ENCODE measurements at regions of chr10 and their contacts with region 1.

Region 1: DNA sequence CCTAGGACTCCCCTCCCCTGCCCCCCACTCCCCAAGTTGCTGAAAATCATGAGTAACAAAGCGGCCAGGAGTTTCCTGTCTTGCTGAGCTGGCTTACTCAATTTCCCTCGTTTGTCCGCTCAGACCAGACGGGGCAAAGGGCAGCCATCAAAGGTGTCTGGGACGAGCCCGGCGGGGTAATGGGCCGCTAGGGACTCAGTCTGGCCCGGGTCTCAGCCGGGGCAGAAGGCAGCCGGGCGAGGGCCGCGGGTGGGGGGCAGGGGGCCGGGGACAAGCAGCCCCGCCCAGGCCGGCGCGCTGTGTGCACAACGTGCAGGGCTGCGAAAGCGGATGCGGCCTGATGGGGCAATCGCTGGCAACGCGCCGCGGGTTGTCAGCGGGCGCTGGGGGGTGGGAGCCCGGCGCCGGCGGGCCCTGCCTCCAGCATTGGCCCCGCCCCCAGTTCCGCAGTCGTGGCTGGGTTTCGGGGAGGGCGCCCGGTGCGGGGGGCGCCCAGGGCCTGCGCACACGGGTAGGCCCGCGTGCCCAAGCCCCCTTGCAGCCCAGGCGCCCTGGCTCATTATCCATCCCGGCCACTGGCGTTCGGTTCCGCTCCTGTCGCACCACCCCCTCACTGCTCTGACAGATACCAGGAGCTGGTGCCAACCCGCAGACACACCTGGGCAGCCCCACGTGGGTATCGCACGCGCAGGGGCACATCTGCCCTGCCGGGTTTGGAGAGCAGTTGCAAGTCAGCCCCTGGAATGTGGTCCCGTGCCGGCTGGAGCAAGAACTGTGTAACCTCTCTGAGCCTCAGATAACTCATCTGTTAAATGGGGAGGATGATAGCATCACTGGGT is 35.1 kb downstream of the DNAJB12 start:
- DNase-seq: peak in 3 of 4 experiments; percentile 49 to 61 (median 58)
- ATAC-seq: no peak
- H3K4me3 ChIP-seq: no peak overlapping the region
- H3K27ac ChIP-seq: peak overlapping the region; percentile 97
- H3K4me1 ChIP-seq: peaks cover 66 to 69% of the 10 kb centered on the region in 2 experiments
- H3K27me3 ChIP-seq: no peaks in the 10 kb centered on the region
- CTCF ChIP-seq: no peak
- EP300 ChIP-seq: no peak; the same call in 1 of the 2 replicates
- POLR2A ChIP-seq: no peak
- RAD21 ChIP-seq: no peak

Region 2: DNA sequence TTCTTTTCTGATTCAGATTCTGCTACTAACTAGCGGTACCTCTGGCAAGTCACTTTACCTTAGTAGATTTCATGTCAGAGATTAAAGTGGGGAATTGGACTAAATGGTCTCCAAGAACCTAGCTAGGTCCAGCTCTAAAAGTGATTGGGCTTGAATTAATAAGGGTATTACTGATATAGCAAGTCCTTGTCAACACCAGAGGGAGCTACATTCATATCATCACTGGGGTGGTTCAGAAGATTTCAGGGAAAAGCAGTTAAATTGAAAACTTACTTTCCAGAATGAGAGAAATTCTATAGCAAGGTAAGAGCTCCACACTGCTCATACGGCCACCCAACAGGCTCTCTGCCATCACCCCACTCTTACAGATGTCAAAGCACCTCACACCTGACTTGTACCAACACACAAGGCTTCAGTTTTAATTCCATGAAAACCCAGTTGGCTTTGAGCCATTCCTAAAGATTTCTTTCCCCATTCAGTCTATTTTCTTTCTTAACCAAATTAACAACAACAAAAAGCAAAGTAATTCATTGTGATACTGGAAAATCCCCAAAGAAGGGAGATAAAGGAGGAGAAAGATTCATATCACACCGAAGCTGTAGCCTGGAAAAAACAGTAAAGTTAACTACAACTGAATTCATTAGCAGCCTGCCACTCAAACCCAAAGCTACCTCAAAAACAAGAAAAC is 193.3 kb before region 1 on chr10:
- CTCF ChIA-PET with region 1: no interaction called
- POLR2A ChIA-PET with region 1: interaction called, 13 read pairs
- in situ Hi-C with region 1: no loop called
- intact Hi-C with region 1: no loop called
- DNase-seq: peak; percentile 27 to 59 (median 46)
- ATAC-seq: peak; percentile 79
- H3K4me3 ChIP-seq: no peak overlapping the region
- H3K27ac ChIP-seq: no peak overlapping the region
- H3K4me1 ChIP-seq: peaks cover 0 to 5% of the 10 kb centered on the region in 2 experiments; a peak in 1 of 5 replicates
- H3K27me3 ChIP-seq: no peaks in the 10 kb centered on the region
- CTCF ChIP-seq: peak; percentile 47 to 82 (median 58); a peak in 5 of 6 replicates
- EP300 ChIP-seq: no peak
- POLR2A ChIP-seq: no peak
- RAD21 ChIP-seq: peak; percentile 77 to 89

Region 3: GRCh38 chr10:72229261-72230251 is 90.1 kb before region 1 on chr10:
- CTCF ChIA-PET with region 1: no interaction called
- POLR2A ChIA-PET with region 1: interaction called, 10 read pairs
- in situ Hi-C with region 1: no loop called
- intact Hi-C with region 1: no loop called
- DNase-seq: no peak
- ATAC-seq: no peak
- H3K4me3 ChIP-seq: no peak overlapping the region
- H3K27ac ChIP-seq: no peak overlapping the region
- H3K4me1 ChIP-seq: no peaks in the 10 kb centered on the region
- H3K27me3 ChIP-seq: no peaks in the 10 kb centered on the region
- CTCF ChIP-seq: no peak
- EP300 ChIP-seq: no peak
- POLR2A ChIP-seq: no peak
- RAD21 ChIP-seq: no peak

Region 4: GRCh38 chr10:72254813-72255568 is 64.6 kb before region 1 on chr10:
- CTCF ChIA-PET with region 1: no interaction called
- POLR2A ChIA-PET with region 1: interaction called, 16 read pairs
- in situ Hi-C with region 1: no loop called
- intact Hi-C with region 1: no loop called
- DNase-seq: peak; percentile 69 to 82 (median 77)
- ATAC-seq: peak; percentile 92
- H3K4me3 ChIP-seq: peak overlapping the region; percentile 15
- H3K27ac ChIP-seq: peak overlapping the region; percentile 64
- H3K4me1 ChIP-seq: peaks cover 25 to 46% of the 10 kb centered on the region in 2 experiments
- H3K27me3 ChIP-seq: no peaks in the 10 kb centered on the region
- CTCF ChIP-seq: peak in 2 of 3 experiments; percentile 26 to 52; a peak in 3 of 6 replicates
- EP300 ChIP-seq: peak; percentile 48; the same call in 1 of the 2 replicates
- POLR2A ChIP-seq: no peak
- RAD21 ChIP-seq: peak; percentile 48 to 67

Region 5: GRCh38 chr10:72285972-72286521 is 33.6 kb before region 1 on chr10:
- CTCF ChIA-PET with region 1: no interaction called
- POLR2A ChIA-PET with region 1: interaction called, 267 read pairs
- in situ Hi-C with region 1: no loop called
- intact Hi-C with region 1: no loop called
- DNase-seq: peak in 2 of 4 experiments; percentile 6 to 14
- ATAC-seq: no peak; the same call in 1 of the 3 replicates
- H3K4me3 ChIP-seq: no peak overlapping the region
- H3K27ac ChIP-seq: no peak overlapping the region
- H3K4me1 ChIP-seq: peaks cover 12 to 24% of the 10 kb centered on the region in 2 experiments
- H3K27me3 ChIP-seq: no peaks in the 10 kb centered on the region
- CTCF ChIP-seq: no peak
- EP300 ChIP-seq: no peak
- POLR2A ChIP-seq: no peak
- RAD21 ChIP-seq: no peak

Region 6: DNA sequence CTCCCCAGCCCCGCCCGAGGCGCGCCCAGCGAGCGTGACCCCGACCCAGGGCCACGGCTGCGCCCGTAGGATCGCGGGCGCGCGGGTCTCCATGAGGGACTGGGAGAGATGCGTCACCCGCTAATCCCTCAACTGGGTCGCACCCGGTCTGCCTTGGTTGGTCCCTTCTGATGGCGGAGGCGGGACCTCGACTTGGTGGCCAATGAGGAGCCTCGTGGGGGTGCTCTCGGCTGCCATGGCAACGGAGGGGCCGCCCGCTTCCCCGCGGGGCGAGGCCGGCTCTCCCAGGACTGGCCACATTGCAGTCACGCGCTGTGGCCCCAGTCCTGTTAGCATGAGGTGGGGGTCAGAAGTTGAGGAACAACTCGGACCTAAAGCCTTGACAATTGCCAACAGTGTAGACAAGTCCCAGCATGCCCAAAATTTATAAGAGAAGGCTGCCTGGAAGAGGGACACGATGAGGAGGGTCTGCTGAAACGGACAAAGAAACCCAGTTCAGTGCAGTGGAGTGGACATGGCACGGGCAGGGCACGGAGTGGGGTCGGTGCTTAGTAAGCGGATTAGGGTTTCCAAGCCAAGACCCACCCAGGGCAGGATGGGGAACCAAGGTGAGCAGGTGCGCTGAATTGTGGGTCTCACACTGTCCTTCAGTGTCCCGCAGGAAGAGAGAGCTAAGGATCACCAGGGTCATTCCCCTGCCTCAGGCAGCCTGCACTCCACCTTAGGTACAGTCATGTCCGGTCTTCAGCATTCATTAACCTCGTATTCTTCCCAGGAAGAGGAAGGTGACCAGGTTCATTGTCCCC is 21.5 kb before region 1 on chr10:
- CTCF ChIA-PET with region 1: no interaction called
- POLR2A ChIA-PET with region 1: interaction called, 199 read pairs
- in situ Hi-C with region 1: no loop called
- intact Hi-C with region 1: loop called (anchors 1 kb)
- DNase-seq: peak; percentile 98 to 100 (median 100)
- ATAC-seq: peak; percentile 96
- H3K4me3 ChIP-seq: peak overlapping the region; percentile 55
- H3K27ac ChIP-seq: peak overlapping the region; percentile 94
- H3K4me1 ChIP-seq: peaks cover 32 to 40% of the 10 kb centered on the region in 2 experiments
- H3K27me3 ChIP-seq: no peaks in the 10 kb centered on the region; a peak in 1 of 5 replicates
- CTCF ChIP-seq: peak in 2 of 3 experiments; percentile 19 to 32; a peak in 4 of 6 replicates
- EP300 ChIP-seq: no peak
- POLR2A ChIP-seq: peak; percentile 53
- RAD21 ChIP-seq: peak in 1 of 2 experiments; percentile 43; a peak in 2 of 4 replicates

Region 7: GRCh38 chr10:72331601-72332422 is 12.2 kb after region 1 on chr10:
- CTCF ChIA-PET with region 1: no interaction called
- POLR2A ChIA-PET with region 1: interaction called, 18 read pairs
- in situ Hi-C with region 1: no loop called
- intact Hi-C with region 1: no loop called
- DNase-seq: peak in 1 of 4 experiments; percentile 26
- ATAC-seq: no peak
- H3K4me3 ChIP-seq: no peak overlapping the region
- H3K27ac ChIP-seq: no peak overlapping the region
- H3K4me1 ChIP-seq: peaks cover 18 to 44% of the 10 kb centered on the region in 2 experiments; a peak in 4 of 5 replicates
- H3K27me3 ChIP-seq: no peaks in the 10 kb centered on the region
- CTCF ChIP-seq: no peak
- EP300 ChIP-seq: no peak
- POLR2A ChIP-seq: peak; percentile 47
- RAD21 ChIP-seq: no peak

Region 8: DNA sequence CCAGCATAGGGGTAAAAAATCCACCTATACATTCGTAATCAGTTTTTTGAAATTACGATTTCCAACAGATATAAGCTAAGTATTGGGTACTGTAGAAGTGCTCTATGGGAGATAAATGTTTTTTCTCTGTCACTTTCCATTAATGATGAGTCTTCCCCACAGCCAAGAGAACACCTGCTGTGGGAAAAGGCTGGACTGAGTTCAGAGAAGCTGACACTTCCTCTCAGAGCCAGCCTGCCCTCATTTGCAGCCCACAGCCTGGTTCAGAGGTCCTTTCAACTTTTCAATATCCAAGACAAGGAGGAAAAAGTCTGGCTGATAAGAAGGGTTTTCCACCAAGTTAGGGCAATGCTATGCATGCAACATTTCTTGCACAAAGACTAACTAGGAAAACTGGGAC is 99.6 kb after region 1 on chr10:
- CTCF ChIA-PET with region 1: no interaction called
- POLR2A ChIA-PET with region 1: no interaction called
- in situ Hi-C with region 1: no loop called
- intact Hi-C with region 1: no loop called
- DNase-seq: no peak
- ATAC-seq: no peak
- H3K4me3 ChIP-seq: no peak overlapping the region
- H3K27ac ChIP-seq: no peak overlapping the region
- H3K4me1 ChIP-seq: peaks cover 0 to 2% of the 10 kb centered on the region in 2 experiments; a peak in 2 of 5 replicates
- H3K27me3 ChIP-seq: no peaks in the 10 kb centered on the region
- CTCF ChIP-seq: no peak
- EP300 ChIP-seq: no peak
- POLR2A ChIP-seq: no peak
- RAD21 ChIP-seq: no peak